Activated CD4-positive, alpha-beta memory T cell treated with anti-CD3 and anti-CD28 coated beads, Interleukin-2, amount 10 ng/mL, durations not matched to agents 7 days and 5 days (primary cell): ENCODE measurements at regions of chr15 and their contacts with region 1.

Region 1: DNA sequence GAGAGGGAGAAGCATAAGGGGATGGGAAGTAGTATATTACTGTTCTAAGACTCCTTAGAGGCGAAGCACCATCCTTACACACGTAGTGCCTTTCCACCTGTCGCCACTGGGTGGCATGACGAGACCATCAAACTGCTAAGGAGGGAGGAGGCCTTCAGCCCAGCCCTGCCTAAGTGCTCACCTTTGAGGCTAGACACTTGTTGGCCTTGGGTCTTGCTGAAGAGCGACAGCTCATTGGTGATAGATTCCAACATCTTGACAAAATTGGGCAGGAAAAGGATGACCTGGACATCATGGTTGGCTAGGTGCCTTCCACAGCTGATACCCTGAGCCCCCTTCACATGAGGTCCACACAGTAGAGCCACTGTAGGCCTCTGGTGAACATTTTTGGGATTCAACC is 19.6 kb downstream of the CLK3 start:
- DNase-seq: peak; percentile 81
- H3K4me3 Mint-ChIP-seq: no peak overlapping the region
- H3K27ac Mint-ChIP-seq: no peak overlapping the region
- H3K4me1 Mint-ChIP-seq: no peaks in the 10 kb centered on the region
- H3K27me3 Mint-ChIP-seq: no peaks in the 10 kb centered on the region

Region 2: GRCh38 chr15:74620636-74621545 is 14.3 kb before region 1 on chr15:
- CTCF ChIA-PET with region 1: interaction called, 89 read pairs
- POLR2A ChIA-PET with region 1: interaction called, 14 read pairs
- DNase-seq: peak; percentile 82
- H3K4me3 Mint-ChIP-seq: no peak overlapping the region
- H3K27ac Mint-ChIP-seq: peak overlapping the region; percentile 26
- H3K4me1 Mint-ChIP-seq: peaks cover 61% of the 10 kb centered on the region
- H3K27me3 Mint-ChIP-seq: no peaks in the 10 kb centered on the region

Region 3: DNA sequence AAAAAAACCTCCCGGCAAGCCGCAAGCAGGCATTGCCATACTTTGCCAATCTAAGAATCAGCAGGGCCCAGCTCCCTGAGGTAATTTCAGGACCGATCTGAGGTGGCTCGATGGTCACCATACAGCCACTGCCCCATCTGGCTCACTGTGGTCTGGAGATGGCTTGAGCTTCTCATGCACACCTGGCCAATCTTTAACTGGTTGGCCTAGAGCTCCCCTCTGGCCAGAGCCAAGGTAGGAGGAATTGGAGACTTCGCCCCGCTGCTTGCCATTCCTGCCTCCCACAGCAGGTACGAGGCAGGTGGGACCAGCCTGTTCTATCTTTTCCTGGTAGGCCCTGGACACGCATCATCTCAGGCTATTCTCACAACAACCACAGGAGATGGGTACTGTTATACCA is 123.5 kb after region 1 on chr15:
- CTCF ChIA-PET with region 1: interaction called, 15 read pairs
- POLR2A ChIA-PET with region 1: interaction called, 3 read pairs
- DNase-seq: no peak
- H3K4me3 Mint-ChIP-seq: no peak overlapping the region
- H3K27ac Mint-ChIP-seq: no peak overlapping the region
- H3K4me1 Mint-ChIP-seq: no peaks in the 10 kb centered on the region
- H3K27me3 Mint-ChIP-seq: peaks cover 3% of the 10 kb centered on the region

Region 4: DNA sequence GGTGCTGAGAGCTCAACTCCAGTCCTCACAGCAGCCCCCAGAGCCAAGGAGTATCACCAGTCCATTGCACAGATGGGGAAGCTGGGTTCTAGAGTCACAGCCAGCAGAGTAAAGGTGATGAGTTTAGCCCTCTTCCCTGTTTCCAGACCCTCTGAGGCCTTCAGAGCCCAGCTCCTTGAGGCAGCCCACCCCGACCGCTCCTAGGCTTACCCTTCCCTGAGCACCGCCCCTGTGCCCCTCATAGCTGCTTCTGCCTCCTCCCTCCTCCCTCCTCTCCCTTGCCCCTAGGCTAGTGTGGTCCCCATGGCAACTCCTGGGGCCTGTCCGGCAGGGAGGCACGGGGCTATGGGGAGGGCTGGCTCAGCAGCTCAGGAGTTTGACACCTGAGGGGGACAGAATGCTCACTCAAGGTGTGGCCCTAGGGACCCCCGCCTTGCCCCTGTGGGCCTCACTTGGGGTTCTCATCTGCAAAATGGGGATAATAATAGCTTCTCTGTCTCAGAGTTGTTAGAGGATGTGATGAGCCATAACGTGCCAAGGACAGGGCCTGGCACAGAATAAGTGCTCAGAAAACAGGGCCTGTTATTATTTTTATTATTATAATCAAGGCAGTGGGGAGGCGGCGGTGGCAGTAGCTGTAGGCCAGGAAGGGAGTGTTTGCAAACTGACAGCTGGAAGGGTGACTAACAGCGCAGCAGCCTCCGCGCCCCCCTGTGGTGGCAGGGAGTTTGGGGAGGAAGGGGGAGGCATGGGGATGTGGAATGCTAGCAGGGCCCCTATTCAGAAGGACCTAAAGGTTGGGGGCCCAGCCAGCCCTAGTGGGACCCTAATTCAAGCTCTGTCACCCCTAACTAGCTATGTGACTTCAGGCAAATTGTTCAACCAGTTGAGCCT is 158.2 kb after region 1 on chr15:
- CTCF ChIA-PET with region 1: interaction called, 30 read pairs
- POLR2A ChIA-PET with region 1: no interaction called
- DNase-seq: peak; percentile 73
- H3K4me3 Mint-ChIP-seq: peak overlapping the region; percentile 10
- H3K27ac Mint-ChIP-seq: peak overlapping the region; percentile 97
- H3K4me1 Mint-ChIP-seq: peaks cover 88% of the 10 kb centered on the region
- H3K27me3 Mint-ChIP-seq: no peaks in the 10 kb centered on the region

Region 5: GRCh38 chr15:74950078-74951000 is 315.1 kb after region 1 on chr15:
- CTCF ChIA-PET with region 1: interaction called, 11 read pairs
- POLR2A ChIA-PET with region 1: no interaction called
- DNase-seq: peak; percentile 83
- H3K4me3 Mint-ChIP-seq: no peak overlapping the region
- H3K27ac Mint-ChIP-seq: no peak overlapping the region
- H3K4me1 Mint-ChIP-seq: peaks cover 15% of the 10 kb centered on the region
- H3K27me3 Mint-ChIP-seq: peaks cover 1% of the 10 kb centered on the region